Activated CD8-positive, alpha-beta T cell treated with anti-CD3 and anti-CD28 coated beads, Interleukin-2, amount 10 ng/mL, durations not matched to agents 7 days and 5 days (primary cell): ENCODE measurements at regions of chr17 and their contacts with region 1.

Region 1: DNA sequence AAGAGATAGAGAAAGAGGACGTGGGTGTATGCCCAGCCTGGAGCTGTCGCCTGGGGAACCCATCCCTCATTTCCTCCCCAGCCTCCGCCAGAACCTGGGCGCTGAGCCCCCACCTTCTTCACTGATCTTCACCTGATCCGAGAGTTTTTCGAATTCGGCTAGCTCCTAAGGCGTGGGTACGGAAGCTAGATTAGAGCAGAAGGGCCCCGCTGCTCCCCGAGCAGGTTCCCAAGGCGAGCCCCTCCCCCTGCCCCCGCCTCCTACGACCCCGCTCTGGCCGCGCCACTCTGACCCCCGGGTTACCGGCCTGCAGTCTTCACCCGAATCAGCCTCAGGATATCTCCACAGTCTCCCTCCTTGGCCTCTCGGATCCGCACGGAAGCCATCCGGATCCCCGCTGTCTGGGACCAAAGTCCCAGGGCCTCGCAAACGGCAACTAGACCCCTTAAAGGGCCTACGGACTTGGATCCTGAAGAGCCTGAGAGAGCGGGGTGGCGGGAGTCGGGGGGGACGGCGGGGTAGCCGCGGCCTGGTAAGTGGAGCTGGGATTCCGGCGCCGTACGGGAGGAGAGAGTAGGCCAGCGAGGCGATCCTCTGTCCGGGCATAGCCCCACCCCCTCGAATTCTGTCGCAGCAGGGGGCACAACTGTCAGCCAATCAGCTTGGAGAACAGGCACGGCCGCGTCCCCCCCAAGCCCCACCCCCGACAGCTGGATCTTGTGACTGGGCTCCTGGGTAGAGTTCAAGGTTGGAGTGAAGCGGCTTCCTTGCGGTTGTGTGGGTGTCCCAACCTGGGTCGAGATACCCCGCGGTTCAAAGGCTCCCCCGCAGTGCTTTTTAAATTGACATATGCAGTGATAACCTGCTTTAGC is at the start of gene SAT2:
- DNase-seq: peak; percentile 91
- ATAC-seq: peak; percentile 95
- H3K4me3 Mint-ChIP-seq: peak within 1 kb of the TSS; percentile 89
- H3K27ac Mint-ChIP-seq: peak within 1 kb of the TSS; percentile 75
- H3K4me1 Mint-ChIP-seq: peaks cover 14% of the 10 kb centered on the region
- H3K27me3 Mint-ChIP-seq: no peaks in the 10 kb centered on the region
- total RNA-seq, gene SAT2: 18.2 to 21.4 TPM

Region 2: GRCh38 chr17:7538891-7539290 is 88.6 kb before region 1 on chr17:
- CTCF ChIA-PET with region 1: no interaction called
- POLR2A ChIA-PET with region 1: no interaction called
- DNase-seq: no peak
- ATAC-seq: no peak
- H3K4me3 Mint-ChIP-seq: no peak overlapping the region
- H3K27ac Mint-ChIP-seq: no peak overlapping the region
- H3K4me1 Mint-ChIP-seq: no peaks in the 10 kb centered on the region
- H3K27me3 Mint-ChIP-seq: peaks cover 20% of the 10 kb centered on the region

Region 3: DNA sequence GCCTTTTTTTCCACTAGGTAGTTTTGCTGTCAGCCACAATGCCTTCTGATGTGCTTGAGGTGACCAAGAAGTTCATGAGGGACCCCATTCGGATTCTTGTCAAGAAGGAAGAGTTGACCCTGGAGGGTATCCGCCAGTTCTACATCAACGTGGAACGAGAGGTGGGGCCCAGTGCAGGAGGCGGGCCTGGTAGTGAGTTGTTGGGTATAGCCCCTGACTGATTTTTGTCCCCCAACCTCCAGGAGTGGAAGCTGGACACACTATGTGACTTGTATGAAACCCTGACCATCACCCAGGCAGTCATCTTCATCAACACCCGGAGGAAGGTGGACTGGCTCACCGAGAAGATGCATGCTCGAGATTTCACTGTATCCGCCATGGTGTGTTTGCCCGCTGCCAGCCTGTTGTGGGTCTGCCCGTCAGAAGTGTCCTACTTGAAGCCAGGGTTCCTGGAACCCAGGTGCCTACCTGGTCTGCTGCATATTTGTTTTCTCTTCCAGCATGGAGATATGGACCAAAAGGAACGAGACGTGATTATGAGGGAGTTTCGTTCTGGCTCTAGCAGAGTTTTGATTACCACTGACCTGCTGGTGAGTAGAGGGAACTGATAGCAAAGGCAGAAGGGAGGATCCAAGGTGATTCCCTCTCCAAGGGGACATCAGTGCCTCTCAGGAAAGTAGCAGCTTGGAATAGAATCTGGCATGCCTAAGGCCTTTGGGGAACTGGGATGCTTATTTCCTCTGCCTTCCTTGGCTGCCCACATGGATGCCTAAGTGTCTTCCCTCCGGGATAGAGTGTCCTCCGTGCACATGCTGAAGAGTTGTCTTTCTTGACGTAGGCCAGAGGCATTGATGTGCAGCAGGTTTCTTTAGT is 49.9 kb before region 1 on chr17:
- CTCF ChIA-PET with region 1: no interaction called
- POLR2A ChIA-PET with region 1: no interaction called
- DNase-seq: no peak
- ATAC-seq: no peak
- H3K4me3 Mint-ChIP-seq: peak overlapping the region; percentile 50
- H3K27ac Mint-ChIP-seq: peak overlapping the region; percentile 100
- H3K4me1 Mint-ChIP-seq: peaks cover 88% of the 10 kb centered on the region
- H3K27me3 Mint-ChIP-seq: no peaks in the 10 kb centered on the region

Region 4: DNA sequence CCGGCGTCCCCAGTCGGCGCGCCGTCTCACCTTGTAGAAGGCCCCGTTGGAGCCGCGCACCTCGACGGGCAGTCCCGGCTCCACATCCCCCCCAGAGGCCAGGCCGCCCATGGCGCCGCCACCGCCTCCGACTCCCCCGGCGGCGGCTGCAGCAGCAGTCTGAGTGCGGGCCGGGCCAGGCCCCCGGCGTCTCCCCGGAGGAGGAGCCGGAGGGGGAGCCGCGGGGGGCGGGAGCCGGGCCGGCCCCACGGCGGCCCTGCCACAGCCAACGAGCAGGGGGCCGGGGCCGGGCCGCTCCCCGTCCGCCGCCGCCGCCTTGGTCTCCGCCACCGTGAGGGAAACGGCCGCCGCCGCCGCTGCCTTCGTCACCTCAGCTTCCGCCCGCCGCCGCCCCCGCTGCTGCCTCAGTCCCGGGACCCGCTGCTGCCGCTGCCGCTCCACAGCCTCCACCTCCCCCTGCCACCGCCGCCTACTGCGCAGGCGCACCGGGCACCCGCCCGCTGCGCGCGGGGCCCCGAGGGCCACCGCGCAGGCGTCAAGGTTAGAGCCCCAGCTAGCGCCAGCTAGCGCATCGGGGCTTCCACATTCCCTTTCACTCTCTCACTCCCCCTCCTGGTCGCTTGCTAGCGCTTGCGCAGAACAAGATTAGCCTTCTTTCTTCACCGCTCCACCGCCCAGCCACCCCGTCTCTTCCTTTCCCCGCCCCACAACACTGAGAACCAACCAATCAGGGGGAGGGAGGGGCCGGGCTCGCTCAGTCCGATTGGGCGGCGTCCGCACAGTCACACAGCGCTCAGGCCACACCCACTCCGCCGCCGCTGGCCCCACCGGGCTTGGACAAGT is 12.8 kb before region 1 on chr17 and contains the start of gene FXR2:
- CTCF ChIA-PET with region 1: interaction called, 10 read pairs
- POLR2A ChIA-PET with region 1: interaction called, 5 read pairs
- DNase-seq: peak; percentile 100
- ATAC-seq: peak; percentile 97
- H3K4me3 Mint-ChIP-seq: peak within 1 kb of the TSS; percentile 83
- H3K27ac Mint-ChIP-seq: peak within 1 kb of the TSS; percentile 85
- H3K4me1 Mint-ChIP-seq: peaks cover 25% of the 10 kb centered on the region
- H3K27me3 Mint-ChIP-seq: peaks cover 2% of the 10 kb centered on the region
- total RNA-seq, gene FXR2: 27.6 to 31.8 TPM